CD4-positive, alpha-beta T cell (primary cell): ENCODE measurements at regions of chr4 and their contacts with region 1.

Region 1: DNA sequence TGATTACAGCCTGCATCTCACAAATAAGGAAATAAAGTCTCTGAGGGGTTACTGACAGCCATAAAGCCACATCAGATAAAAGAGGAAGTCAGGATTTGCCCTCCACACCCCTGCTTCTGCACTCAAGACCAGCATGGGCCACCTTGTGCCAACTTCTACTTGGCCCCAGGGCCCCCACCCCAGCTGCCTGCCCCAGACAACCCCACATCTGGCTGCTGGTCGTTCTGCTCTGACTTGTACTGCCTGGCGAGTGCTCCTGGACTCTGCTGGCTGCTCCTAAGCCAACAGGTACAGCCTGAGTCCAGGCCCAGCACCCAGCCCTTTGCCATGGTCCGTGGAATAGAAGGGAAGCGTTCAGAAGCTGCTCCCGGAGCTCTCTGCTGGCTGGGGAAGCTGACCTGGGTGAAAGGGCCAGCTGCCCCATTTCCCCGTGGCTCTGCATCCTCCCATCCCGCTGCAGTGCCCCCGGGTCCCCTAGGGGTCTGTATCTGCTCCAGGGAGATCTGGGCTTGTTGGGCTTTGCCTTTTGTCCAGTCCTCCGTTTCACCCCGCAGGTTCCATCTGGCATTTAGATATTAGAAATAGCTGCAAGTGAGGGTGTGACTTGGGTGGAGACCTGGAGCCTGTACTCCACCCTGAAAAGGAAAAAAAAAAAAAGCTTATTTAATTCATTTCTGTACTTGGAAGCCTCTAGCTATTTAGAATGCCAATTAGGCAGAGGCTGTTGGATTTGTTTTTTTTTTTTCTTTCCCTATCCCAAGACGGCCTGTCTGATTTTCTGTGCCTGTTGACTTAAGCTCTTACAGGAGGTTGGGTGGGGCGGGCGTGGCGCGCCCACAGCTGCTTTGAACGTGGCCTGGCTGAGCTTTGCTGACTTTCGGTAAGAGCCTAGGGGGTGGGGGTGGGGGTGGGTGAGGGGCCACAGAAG is 194.7 kb downstream of the PTTG2 start:
- DNase-seq: peak in 11 of 14 experiments; percentile 13 to 50 (median 37)
- ATAC-seq: peak; percentile 58
- H3K4me3 ChIP-seq: no peak overlapping the region
- H3K4me3 Mint-ChIP-seq: peak overlapping the region; percentile 35
- H3K27ac ChIP-seq: no peak overlapping the region
- H3K27ac Mint-ChIP-seq: no peak overlapping the region
- H3K4me1 ChIP-seq: peaks cover 41% of the 10 kb centered on the region
- H3K4me1 Mint-ChIP-seq: peaks cover 60% of the 10 kb centered on the region
- H3K27me3 ChIP-seq: no peaks in the 10 kb centered on the region
- H3K27me3 Mint-ChIP-seq: no peaks in the 10 kb centered on the region
- CTCF ChIP-seq: no peak

Region 2: GRCh38 chr4:38119668-38120385 is 35.1 kb before region 1 on chr4:
- CTCF ChIA-PET with region 1: no interaction called
- POLR2A ChIA-PET with region 1: no interaction called
- intact Hi-C with region 1: loop called in 1 of 2 experiments (anchors 5 kb)
- DNase-seq: no peak
- ATAC-seq: no peak
- H3K4me3 ChIP-seq: no peak overlapping the region
- H3K4me3 Mint-ChIP-seq: no peak overlapping the region
- H3K27ac ChIP-seq: no peak overlapping the region
- H3K27ac Mint-ChIP-seq: no peak overlapping the region
- H3K4me1 ChIP-seq: no peaks in the 10 kb centered on the region
- H3K4me1 Mint-ChIP-seq: no peaks in the 10 kb centered on the region
- H3K27me3 ChIP-seq: no peaks in the 10 kb centered on the region
- H3K27me3 Mint-ChIP-seq: no peaks in the 10 kb centered on the region
- CTCF ChIP-seq: no peak

Region 3: GRCh38 chr4:38132107-38132673 is 22.8 kb before region 1 on chr4:
- CTCF ChIA-PET with region 1: no interaction called
- POLR2A ChIA-PET with region 1: interaction called, 8 read pairs
- intact Hi-C with region 1: loop called in 1 of 2 experiments (anchors 2 kb)
- DNase-seq: peak; percentile 35 to 90 (median 54)
- ATAC-seq: peak; percentile 75
- H3K4me3 ChIP-seq: peak overlapping the region; percentile 6
- H3K4me3 Mint-ChIP-seq: peak overlapping the region; percentile 85
- H3K27ac ChIP-seq: peak overlapping the region; percentile 37 to 59
- H3K27ac Mint-ChIP-seq: peak overlapping the region; percentile 91
- H3K4me1 ChIP-seq: peaks cover 54% of the 10 kb centered on the region
- H3K4me1 Mint-ChIP-seq: peaks cover 53% of the 10 kb centered on the region
- H3K27me3 ChIP-seq: no peaks in the 10 kb centered on the region
- H3K27me3 Mint-ChIP-seq: no peaks in the 10 kb centered on the region
- CTCF ChIP-seq: no peak

Region 4: GRCh38 chr4:38144031-38144430 is 10.9 kb before region 1 on chr4:
- CTCF ChIA-PET with region 1: no interaction called
- POLR2A ChIA-PET with region 1: no interaction called
- intact Hi-C with region 1: no loop called
- DNase-seq: no peak
- ATAC-seq: no peak
- H3K4me3 ChIP-seq: no peak overlapping the region
- H3K4me3 Mint-ChIP-seq: no peak overlapping the region
- H3K27ac ChIP-seq: no peak overlapping the region
- H3K27ac Mint-ChIP-seq: no peak overlapping the region
- H3K4me1 ChIP-seq: no peaks in the 10 kb centered on the region
- H3K4me1 Mint-ChIP-seq: no peaks in the 10 kb centered on the region
- H3K27me3 ChIP-seq: no peaks in the 10 kb centered on the region
- H3K27me3 Mint-ChIP-seq: no peaks in the 10 kb centered on the region
- CTCF ChIP-seq: no peak